ENCODE measurements at regions of chr1 and their contacts with region 1.

Region 1: DNA sequence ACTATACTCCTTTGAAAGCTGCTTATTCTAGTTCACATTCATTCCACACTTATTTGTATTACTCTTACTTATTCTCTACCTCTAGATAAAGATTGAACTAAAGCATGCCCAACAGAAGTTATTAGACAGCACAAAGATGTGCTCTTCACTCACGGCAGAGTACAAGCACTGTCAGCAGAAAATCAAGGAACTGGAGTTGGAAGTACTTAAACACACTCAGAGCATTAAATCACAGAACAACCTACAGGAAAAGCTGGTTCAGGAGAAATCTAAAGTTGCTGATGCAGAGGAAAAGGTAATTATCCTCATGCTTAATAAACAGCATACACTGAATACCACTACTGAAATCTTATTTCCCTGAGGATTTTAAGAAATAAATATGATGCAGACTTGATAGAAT is 81.3 kb upstream of the PPIH start:
- DNase-seq: no peak

Region 2: DNA sequence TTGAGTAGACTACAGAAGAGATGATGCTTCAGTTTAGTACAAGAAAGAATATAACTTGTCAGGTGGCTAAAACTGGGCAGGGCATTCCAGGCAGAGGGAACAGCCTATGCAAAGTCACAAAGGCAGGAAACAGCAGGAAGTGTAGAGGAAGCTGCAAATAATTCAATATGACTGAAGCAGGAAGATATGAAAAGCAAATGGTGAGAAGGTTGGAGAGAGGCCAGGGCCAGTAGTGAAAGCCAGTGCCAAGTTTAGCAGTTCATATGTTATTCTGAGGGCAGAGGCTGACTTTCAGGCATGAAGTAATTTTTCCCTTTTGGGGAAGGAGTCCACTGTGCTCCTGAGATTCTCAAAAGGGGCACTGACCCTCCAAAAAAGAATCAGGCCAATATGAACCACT is 97.3 kb after region 1 on chr1:
- intact Hi-C with region 1: no loop called
- DNase-seq: no peak

Region 3: GRCh38 chr1:42747125-42747524 is 170.2 kb after region 1 on chr1:
- intact Hi-C with region 1: loop called (anchors 2 kb)
- DNase-seq: peak; percentile 61

Measured in cardiac septum (tissue), 1 donor.